AG04450 (cell line): ENCODE measurements at regions of chr20 and their contacts with region 1.

Region 1: DNA sequence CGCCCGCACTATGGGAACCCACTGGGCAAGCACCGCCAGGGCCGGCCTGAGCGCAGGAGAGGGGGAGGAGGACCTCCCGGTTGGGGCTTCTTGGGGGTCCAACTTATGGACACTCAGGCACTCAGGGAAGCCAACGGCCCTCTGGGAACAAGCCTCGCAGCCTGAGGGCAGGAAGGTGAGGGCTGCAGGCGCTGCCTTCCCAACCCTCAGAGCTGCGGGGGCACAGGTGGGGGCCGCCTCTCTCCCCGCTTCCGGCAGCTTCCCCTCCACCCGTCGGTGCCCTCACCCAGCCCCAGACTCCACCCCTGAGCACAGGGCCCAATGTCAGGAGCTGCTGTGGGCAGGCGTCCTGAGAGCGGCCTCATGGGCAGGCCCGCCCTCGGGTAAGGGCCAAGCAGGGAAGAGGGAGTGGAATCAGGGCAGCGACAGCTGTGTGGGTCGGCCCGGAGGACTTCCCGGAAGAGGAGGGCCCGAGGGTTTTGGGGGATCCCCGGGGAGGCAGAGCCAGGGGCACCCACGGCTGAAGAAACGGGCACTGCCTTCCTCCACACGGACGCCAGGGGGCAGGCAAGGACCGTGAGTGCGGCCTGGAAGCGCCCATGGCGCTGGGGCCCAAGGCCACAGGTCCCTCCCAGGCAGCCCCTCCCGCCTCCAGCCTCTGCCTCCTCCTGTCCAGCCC is 488 bp upstream of the PTK6 start:
- DNase-seq: peak; percentile 81
- H3K4me3 ChIP-seq: peak overlapping the region; percentile 46
- H3K27ac ChIP-seq: no peak overlapping the region
- H3K27me3 ChIP-seq: peaks cover 6% of the 10 kb centered on the region
- CTCF ChIP-seq: peak; percentile 92

Region 2: GRCh38 chr20:63442100-63442493 is 95.6 kb before region 1 on chr20:
- CTCF ChIA-PET with region 1: no interaction called
- POLR2A ChIA-PET with region 1: no interaction called
- DNase-seq: no peak
- H3K4me3 ChIP-seq: no peak overlapping the region
- H3K27ac ChIP-seq: no peak overlapping the region
- H3K27me3 ChIP-seq: peaks cover 2% of the 10 kb centered on the region
- CTCF ChIP-seq: peak; percentile 23; the same call in 1 of the 2 replicates

Region 3: DNA sequence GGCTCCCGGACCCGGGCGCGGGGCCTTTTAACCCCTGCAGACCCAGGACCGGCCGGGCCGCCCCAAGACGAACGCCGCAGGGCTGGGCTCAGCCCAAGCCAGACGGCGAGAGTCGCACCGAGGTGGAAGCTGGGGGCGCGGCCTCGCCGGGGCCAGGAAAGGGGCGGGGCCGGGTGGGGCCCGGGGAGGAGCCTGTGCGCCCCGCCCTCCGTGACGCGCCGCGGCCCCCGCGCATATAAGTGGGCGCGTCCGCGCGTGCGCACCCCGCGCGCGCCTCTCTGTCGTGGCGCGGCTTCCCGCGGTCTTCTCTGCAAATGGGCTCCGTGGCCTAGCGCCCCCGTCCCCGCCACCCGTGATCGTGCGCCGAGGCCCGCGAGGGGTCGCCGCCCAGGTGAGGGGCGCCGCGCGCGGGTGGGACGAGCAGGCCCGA is 17.1 kb before region 1 on chr20 and contains the start of gene PPDPF:
- CTCF ChIA-PET with region 1: interaction called, 3 read pairs
- POLR2A ChIA-PET with region 1: interaction called, 12 read pairs
- DNase-seq: peak; percentile 34
- H3K4me3 ChIP-seq: peak within 1 kb of the TSS; percentile 88
- H3K27ac ChIP-seq: peak within 1 kb of the TSS; percentile 47
- H3K27me3 ChIP-seq: no peaks in the 10 kb centered on the region
- CTCF ChIP-seq: no peak
- polyA plus RNA-seq, gene PPDPF: 13.5 and 21.7 TPM in 2 replicates

Region 4: GRCh38 chr20:63641792-63642544 is 104.3 kb after region 1 on chr20:
- CTCF ChIA-PET with region 1: interaction called, 10 read pairs
- POLR2A ChIA-PET with region 1: no interaction called
- DNase-seq: no peak
- H3K4me3 ChIP-seq: peak overlapping the region; percentile 55
- H3K27ac ChIP-seq: no peak overlapping the region
- H3K27me3 ChIP-seq: no peaks in the 10 kb centered on the region
- CTCF ChIP-seq: peak; percentile 43

Region 5: DNA sequence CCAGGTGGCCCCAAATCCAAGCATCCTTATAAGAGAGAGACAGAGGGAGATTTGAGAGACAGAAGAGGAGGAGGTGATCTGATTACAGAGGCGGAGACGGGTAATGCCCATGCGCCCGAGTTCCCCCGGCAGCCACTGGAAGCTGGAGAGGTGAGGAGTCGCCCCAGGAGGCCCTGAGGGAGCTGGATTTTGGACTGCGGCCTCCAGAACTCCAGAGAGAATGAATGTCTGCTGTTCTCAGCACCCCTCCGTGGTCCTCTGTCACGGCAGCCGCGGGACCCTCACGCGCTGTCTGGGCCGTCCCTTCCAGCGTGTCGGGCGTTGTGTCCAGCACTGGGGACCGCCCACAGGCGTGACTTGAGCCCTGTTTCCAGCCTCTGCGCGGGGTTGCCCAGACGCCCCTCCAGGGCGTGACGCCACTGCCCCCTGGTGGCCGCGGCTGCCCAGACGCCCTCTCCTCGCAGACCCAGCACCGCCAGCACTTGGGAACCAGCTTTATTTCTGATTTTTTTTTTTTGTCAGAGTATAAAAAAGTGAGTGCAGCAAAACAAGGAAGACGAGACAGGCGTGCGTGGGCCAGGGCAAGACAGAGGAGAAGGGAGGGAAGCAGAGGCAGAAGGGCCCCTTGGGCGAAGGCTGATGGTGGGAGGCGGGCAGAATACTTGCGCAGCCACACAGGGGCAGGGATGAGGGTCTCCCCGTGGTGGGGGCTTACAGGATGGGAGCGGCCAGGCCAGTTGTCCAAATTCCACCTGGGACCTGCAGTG is 436.2 kb after region 1 on chr20:
- CTCF ChIA-PET with region 1: interaction called, 24 read pairs
- POLR2A ChIA-PET with region 1: no interaction called
- DNase-seq: peak; percentile 55
- H3K4me3 ChIP-seq: peak overlapping the region; percentile 53
- H3K27ac ChIP-seq: peak overlapping the region; percentile 65
- H3K27me3 ChIP-seq: no peaks in the 10 kb centered on the region
- CTCF ChIP-seq: peak; percentile 98